Spleen (tissue), 13 donors: ENCODE measurements at regions of chr2 and their contacts with region 1.

Region 1: GRCh38 chr2:96407041-96407918 is 71.7 kb downstream of the NCAPH start:
- DNase-seq: peak; percentile 89
- H3K4me3 ChIP-seq: peak overlapping the region in 1 of 8 donors; percentile 15
- H3K27ac ChIP-seq: peak overlapping the region in 4 of 8 donors; percentile 29 to 56 (median 39)
- H3K4me1 ChIP-seq: peaks cover 6 to 44% (median 21%) of the 10 kb centered on the region in 6 donors
- H3K27me3 ChIP-seq: no peaks in the 10 kb centered on the region
- CTCF ChIP-seq: peak; percentile 60 to 86 (median 79)
- POLR2A ChIP-seq: no peak

Region 2: DNA sequence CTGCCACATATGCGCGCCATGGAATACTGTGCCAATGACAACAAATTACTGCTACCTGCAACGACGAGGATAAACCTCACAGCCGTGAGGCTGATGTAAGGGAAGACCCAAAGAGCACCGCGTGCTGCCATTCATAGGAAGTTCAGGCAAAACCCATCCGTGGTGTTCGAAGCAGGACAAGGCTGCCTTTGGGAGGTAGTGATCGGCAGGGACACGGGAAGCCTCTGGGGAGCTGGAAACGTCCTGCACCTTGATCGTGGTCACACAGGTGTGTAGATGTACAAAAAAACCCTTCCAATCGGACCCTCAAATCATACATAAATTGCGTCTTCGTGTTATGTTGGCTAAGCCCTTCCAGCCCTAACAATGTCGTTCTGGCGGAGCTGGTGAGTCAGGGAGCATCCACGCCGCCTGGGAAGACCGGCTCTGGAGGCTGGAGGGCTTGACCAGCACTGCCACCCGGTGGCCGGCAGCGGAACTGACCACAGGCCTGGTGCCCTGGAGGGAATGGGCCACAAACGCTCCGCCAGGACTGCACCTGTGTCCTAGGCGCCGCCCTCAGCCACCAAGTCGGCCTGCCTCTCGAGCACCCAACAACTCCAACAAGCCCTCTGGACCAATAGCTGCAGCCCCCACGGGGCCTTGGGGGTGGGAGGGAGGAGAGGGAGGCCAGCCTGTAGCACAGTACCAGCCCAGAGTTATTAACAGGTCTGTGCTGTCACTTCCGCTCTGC is 102.0 kb after region 1 on chr2:
- intact Hi-C with region 1: loop called (anchors 5 kb)
- DNase-seq: peak; percentile 95
- H3K4me3 ChIP-seq: peak overlapping the region in 1 of 8 donors; percentile 22
- H3K27ac ChIP-seq: no peak overlapping the region
- H3K4me1 ChIP-seq: peaks cover 7 to 36% (median 23%) of the 10 kb centered on the region in 6 donors
- H3K27me3 ChIP-seq: peaks cover 0 to 22% (median 0%) of the 10 kb centered on the region in 7 donors
- CTCF ChIP-seq: peak; percentile 85 to 98 (median 94)
- POLR2A ChIP-seq: no peak